Kidney (tissue), 22 donors: ENCODE measurements at regions of chr20 and their contacts with region 1.

Region 1: DNA sequence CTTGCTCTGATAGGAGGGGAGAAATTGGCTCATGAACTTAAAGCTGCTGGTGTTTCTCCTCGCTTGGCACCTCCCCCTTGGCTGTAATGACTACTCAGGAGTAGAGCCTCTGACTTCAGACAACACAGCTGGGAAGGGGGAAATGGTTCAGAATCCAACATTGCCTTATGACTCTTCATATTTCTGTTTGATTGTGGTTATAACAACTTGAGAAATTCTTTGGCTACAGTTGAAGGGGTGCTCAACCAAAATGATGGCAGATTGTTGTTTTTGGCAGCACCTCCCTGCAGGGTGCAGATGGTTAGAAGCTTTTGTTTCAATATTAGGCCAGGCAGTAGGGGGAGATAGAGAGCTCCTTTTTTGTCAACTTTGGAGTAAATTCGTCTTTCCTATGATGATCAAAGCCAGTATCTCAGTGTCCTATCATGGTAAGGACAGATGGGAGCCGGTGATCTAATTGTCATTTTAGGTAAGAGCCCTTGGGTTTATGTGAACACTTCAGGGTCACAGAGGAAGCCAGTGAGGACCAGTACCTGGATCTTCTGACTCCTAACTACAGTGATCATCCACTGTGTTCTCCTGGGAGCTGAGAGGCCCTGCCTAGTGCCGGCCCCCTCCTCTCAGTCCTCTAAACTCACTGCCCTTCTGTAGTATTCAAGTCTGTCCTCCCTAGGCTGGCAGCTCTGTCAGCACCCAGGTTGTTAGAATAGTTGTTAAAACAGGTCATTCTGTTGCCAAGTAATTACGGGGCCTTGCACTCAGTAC is 39.9 kb downstream of the RPRD1B start:
- DNase-seq: peak in 3 of 5 donors; percentile 34 to 87 (median 74)
- H3K4me3 ChIP-seq: no peak overlapping the region
- H3K27ac ChIP-seq: peak overlapping the region in 1 of 2 donors; percentile 51
- H3K4me1 ChIP-seq: peaks cover 0 to 5% (median 0%) of the 10 kb centered on the region in 3 donors
- H3K27me3 ChIP-seq: no peaks in the 10 kb centered on the region
- CTCF ChIP-seq: peak; percentile 70

Region 2: GRCh38 chr20:38165089-38165989 is 91.8 kb after region 1 on chr20 and contains the start of gene TGM2:
- intact Hi-C with region 1: loop called (anchors 10 kb)
- DNase-seq: peak; percentile 78 to 95 (median 85)
- H3K4me3 ChIP-seq: peak within 1 kb of the TSS; percentile 41 to 83 (median 68)
- H3K27ac ChIP-seq: peak within 1 kb of the TSS; percentile 34 to 51
- H3K4me1 ChIP-seq: peaks cover 0 to 19% (median 6%) of the 10 kb centered on the region in 3 donors
- H3K27me3 ChIP-seq: no peaks in the 10 kb centered on the region
- CTCF ChIP-seq: peak; percentile 86
- total RNA-seq, gene TGM2: 611 TPM

Region 3: DNA sequence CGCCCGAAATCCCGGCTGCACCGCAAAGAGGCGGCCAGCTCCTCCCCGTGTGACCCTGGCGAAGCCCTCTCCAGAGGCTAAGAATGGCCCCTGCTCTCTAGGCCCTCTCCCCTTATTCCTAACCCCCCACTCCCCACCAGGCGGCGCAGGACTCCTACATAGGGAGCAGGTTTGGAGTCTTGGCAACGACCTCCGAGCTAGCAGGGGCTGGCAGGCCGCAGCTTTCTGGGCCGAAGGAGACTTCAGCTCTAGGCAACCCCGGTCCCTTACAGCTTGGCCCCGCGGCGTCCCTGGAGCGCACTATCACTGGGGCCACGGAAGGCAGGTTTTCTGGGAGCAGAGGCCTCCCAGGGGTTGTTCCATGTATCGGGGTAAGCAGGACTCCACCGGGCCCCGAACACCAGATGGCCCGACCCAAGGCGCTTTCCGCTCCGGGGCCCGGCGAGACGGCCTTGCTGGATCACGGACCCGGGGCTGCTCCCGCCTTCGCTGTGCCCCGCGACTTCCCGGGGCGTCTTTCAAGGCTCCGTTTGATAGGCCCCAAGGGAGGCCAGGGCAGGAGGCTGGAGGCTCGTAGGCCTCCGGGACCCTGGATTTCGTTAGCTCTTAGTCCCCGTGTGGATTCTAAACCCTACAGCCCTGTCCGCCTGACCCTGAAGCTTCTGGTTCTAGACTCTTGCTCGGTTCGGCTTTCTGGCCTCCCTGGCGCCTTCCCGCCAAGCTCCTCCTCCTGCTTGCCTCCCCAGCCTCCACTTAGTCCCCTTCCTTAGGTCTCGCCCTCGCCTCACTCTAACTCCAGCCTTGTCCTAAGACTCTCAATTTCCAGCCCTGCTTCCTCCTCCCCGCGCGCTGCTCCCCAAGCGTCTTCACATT is 652.7 kb after region 1 on chr20:
- intact Hi-C with region 1: no loop called
- DNase-seq: peak in 4 of 5 donors; percentile 80 to 90 (median 83)
- H3K4me3 ChIP-seq: no peak overlapping the region
- H3K27ac ChIP-seq: no peak overlapping the region
- H3K4me1 ChIP-seq: peaks cover 0 to 16% (median 5%) of the 10 kb centered on the region in 3 donors
- H3K27me3 ChIP-seq: peaks cover 76% of the 10 kb centered on the region
- CTCF ChIP-seq: no peak